Spleen (tissue), 13 donors: ENCODE measurements at regions of chr18 and their contacts with region 1.

Region 1: DNA sequence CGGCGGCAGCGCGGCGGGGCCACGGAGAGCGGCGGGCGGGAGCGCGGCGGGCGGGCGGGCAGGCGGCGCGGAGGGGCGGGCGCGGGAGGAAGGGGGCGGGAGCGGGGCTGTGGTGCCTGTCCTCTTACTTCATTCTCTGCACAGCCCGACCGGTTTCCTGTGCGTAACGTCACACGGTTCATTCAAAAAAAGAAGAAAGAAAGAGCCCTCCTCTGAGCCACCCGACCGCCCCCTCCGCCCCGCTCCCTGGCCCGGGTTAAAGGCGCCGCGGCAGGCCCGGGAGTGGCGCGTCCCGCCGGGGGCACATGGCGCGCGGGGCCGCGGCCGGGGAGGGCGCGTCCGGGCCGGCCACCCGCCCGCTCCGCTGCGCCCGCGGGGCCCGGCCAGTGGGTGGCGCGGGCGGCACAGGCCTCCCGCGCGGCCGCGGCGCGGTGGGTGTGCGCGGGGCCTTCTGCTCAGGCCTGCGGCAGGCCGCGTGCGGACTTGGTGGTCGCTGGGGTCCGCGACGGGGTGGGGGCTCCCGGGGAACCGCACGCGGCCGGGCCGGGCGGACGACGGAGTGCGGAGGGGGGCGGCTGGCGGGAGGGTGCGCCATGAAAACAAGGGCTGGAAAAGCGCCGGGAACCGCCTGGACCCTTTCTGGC is 599 bp upstream of the BCL2 start:
- DNase-seq: peak; percentile 95
- H3K4me3 ChIP-seq: peak overlapping the region in 7 of 8 donors; percentile 27 to 94 (median 79)
- H3K27ac ChIP-seq: peak overlapping the region in 7 of 8 donors; percentile 89 to 97 (median 92)
- H3K4me1 ChIP-seq: peaks cover 26 to 71% (median 58%) of the 10 kb centered on the region in 6 donors
- H3K27me3 ChIP-seq: peaks cover 0 to 4% (median 0%) of the 10 kb centered on the region in 7 donors
- CTCF ChIP-seq: peak in 3 of 11 experiments; percentile 3 to 22 (median 10)
- POLR2A ChIP-seq: no peak

Region 2: DNA sequence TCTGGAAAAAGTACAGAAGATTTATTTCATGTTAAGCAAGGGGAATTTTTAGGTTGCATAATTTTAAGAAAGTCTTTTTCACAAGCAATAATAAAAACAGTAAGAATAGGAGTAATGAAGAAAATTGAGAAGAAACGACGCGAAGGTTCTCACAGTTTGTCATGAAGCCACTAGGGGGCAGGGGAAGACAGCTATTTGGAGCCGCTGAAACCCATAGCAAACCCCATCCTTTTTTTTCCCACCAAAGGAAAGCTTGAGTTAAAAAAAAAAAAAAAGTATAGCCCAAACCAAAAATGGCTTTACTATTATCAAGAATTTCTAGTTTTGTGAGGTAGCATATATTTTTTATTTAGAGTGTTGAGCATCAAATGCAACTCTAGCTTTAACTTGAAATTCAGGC is 303.9 kb before region 1 on chr18:
- intact Hi-C with region 1: loop called (anchors 5 kb)
- DNase-seq: no peak
- H3K4me3 ChIP-seq: no peak overlapping the region
- H3K27ac ChIP-seq: no peak overlapping the region
- H3K4me1 ChIP-seq: no peaks in the 10 kb centered on the region
- H3K27me3 ChIP-seq: peaks cover 0 to 16% (median 0%) of the 10 kb centered on the region in 7 donors
- CTCF ChIP-seq: peak; percentile 47 to 85 (median 79)
- POLR2A ChIP-seq: no peak

Region 3: DNA sequence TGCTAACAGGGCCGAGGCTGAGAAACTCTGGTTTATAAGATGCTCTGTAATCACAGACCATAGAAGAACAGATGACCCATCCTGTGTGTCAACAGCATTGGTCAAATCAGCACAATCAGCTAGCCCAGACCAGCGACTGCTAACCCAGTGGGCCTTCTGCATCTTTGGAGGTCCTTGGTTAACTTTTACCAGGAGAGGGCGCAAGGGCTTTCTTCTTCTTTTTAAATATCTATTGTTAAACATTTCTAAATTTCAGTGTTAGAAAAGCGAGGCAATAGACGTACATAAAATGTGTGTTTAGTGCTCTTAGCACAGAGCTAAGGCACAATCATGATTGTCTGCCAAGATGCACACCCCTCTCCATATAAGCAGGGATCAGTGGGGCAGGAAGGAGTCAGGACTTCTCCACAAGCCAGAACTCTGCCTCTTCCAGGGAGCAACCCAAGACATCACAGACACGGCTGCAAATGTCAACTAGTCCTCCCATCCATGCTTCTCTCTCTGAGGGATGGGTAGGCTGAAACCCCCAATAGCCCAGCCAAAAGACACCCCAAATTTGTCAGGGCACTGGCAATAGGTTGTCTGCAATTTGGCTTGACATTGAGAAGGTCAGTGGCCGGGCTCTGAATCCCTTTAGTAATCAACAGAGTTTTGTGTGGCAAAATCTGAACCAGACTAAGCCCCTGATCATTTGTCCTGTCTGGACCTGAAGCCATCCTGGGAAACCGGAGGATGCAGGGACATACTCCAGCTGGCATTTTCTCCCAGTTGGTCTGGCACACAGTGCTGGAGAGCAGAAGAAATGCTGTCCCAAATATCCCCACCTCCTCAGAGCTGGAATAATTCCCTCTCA is 188.8 kb before region 1 on chr18:
- intact Hi-C with region 1: loop called (anchors 5 kb)
- DNase-seq: no peak
- H3K4me3 ChIP-seq: no peak overlapping the region
- H3K27ac ChIP-seq: peak overlapping the region; percentile 2 to 75 (median 28)
- H3K4me1 ChIP-seq: peaks cover 0 to 63% (median 25%) of the 10 kb centered on the region in 6 donors
- H3K27me3 ChIP-seq: no peaks in the 10 kb centered on the region
- CTCF ChIP-seq: peak; percentile 31 to 83 (median 68)
- POLR2A ChIP-seq: no peak

Region 4: DNA sequence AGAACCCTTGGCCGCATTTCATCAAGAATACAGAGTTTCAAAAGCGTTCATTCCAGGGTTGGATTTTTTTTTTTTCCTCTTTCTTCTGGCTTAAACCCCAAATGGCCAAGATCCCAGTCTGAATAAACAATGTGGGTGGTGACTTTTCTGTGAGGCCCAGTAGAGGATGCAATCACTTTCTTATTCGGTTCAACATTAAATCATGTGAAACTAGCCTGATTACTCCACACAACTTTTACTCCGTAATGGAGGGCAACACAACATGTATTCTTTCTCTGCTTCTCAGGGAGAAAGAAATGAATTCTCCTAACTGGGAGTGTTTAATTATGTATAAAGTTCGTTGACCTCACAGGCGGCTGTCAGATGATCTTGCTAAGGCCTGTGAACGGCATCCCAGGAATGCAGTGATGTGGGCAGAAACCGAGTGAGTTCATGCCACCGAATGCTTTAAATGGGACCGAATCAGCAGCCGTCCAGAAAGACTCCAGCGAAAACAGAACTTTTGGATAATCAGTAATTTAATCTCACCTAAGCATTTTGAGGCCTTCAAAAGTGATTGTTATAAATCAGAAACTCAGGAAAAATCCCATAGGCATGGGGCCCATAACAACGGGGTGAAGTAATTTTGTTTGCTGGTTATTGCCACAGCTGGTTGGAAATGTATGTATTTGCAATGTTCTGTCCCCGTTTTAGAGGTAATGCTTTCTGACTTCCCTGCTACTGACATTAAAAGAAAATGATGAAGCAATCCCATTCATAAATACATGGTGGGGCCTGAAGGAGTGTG is 82.1 kb before region 1 on chr18:
- intact Hi-C with region 1: loop called (anchors 10 kb)
- DNase-seq: no peak
- H3K4me3 ChIP-seq: no peak overlapping the region
- H3K27ac ChIP-seq: peak overlapping the region in 7 of 8 donors; percentile 62 to 89 (median 81)
- H3K4me1 ChIP-seq: peaks cover 9 to 69% (median 30%) of the 10 kb centered on the region in 6 donors
- H3K27me3 ChIP-seq: no peaks in the 10 kb centered on the region
- CTCF ChIP-seq: no peak
- POLR2A ChIP-seq: no peak